ENCODE measurements at regions of chr2 and their contacts with region 1.

Region 1: GRCh38 chr2:102166189-102166845 is 20.5 kb upstream of the IL1RL2 start:
- DNase-seq: peak; percentile 67
- ATAC-seq: peak; percentile 97
- H3K4me3 ChIP-seq: no peak overlapping the region
- H3K27ac ChIP-seq: no peak overlapping the region
- H3K4me1 ChIP-seq: peaks cover 17% of the 10 kb centered on the region
- H3K27me3 ChIP-seq: no peaks in the 10 kb centered on the region
- CTCF ChIP-seq: peak; percentile 83
- EP300 ChIP-seq: peak in 1 of 2 experiments; percentile 52; a peak in 1 of 4 replicates
- POLR2A ChIP-seq: no peak
- RAD21 ChIP-seq: peak; percentile 86

Region 2: GRCh38 chr2:101473911-101474701 is 692.2 kb before region 1 on chr2:
- CTCF ChIA-PET with region 1: no interaction called
- POLR2A ChIA-PET with region 1: no interaction called
- in situ Hi-C with region 1: no loop called
- intact Hi-C with region 1: no loop called
- DNase-seq: no peak
- ATAC-seq: peak; percentile 8; the same call in 2 of the 3 replicates
- H3K4me3 ChIP-seq: peak overlapping the region in 2 of 3 experiments; percentile 23 to 31; a peak in 3 of 6 replicates
- H3K27ac ChIP-seq: no peak overlapping the region
- H3K4me1 ChIP-seq: peaks cover 20% of the 10 kb centered on the region
- H3K27me3 ChIP-seq: peaks cover 4 to 25% of the 10 kb centered on the region in 2 experiments; a peak in 3 of 5 replicates
- CTCF ChIP-seq: no peak
- EP300 ChIP-seq: no peak
- POLR2A ChIP-seq: no peak
- RAD21 ChIP-seq: no peak

Region 3: GRCh38 chr2:102240640-102241370 is 74.5 kb after region 1 on chr2:
- CTCF ChIA-PET with region 1: no interaction called
- POLR2A ChIA-PET with region 1: interaction called, 4 read pairs
- in situ Hi-C with region 1: no loop called
- intact Hi-C with region 1: loop called (anchors 1 kb)
- DNase-seq: peak; percentile 88
- ATAC-seq: peak; percentile 97
- H3K4me3 ChIP-seq: peak overlapping the region in 2 of 3 experiments; percentile 12 to 55; a peak in 3 of 6 replicates
- H3K27ac ChIP-seq: no peak overlapping the region
- H3K4me1 ChIP-seq: peaks cover 49% of the 10 kb centered on the region
- H3K27me3 ChIP-seq: peaks cover 0 to 38% of the 10 kb centered on the region in 2 experiments; a peak in 3 of 5 replicates
- CTCF ChIP-seq: peak; percentile 100
- EP300 ChIP-seq: peak in 1 of 2 experiments; percentile 86; a peak in 2 of 4 replicates
- POLR2A ChIP-seq: no peak
- RAD21 ChIP-seq: peak; percentile 97